Heart left ventricle (tissue), 16 donors: ENCODE measurements at regions of chr20 and their contacts with region 1.

Region 1: DNA sequence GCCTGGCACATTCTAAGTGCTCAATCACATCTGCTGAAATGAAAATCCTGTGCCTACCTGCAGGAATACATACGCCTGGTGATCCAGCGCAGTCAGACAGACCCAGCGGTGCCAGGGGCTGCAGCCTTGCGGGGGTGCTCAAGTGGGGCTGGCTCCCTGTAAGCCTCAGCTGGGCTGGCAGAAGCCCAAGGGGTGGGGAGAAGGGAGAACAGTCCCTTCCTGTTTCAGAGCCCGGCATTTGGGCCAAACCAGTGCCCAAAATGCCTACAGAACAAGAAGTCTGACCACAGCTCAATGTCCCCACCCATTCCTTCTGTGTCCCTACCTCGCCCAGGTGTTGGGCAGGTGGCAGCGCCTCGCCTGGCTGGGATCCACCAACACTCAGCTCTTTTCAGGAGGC is 22.6 kb downstream of the KCNK15 start:
- DNase-seq: no peak
- ATAC-seq: no peak
- H3K4me3 ChIP-seq: no peak overlapping the region
- H3K27ac ChIP-seq: no peak overlapping the region
- H3K4me1 ChIP-seq: peaks cover 0 to 3% (median 0%) of the 10 kb centered on the region in 12 donors
- H3K27me3 ChIP-seq: peaks cover 0 to 22% (median 5%) of the 10 kb centered on the region in 9 donors
- CTCF ChIP-seq: no peak
- POLR2A ChIP-seq: no peak

Region 2: GRCh38 chr20:44788706-44789456 is 20.6 kb after region 1 on chr20:
- intact Hi-C with region 1: loop called in 1 of 10 experiments (anchors 2 kb)
- DNase-seq: no peak
- ATAC-seq: no peak
- H3K4me3 ChIP-seq: no peak overlapping the region
- H3K27ac ChIP-seq: no peak overlapping the region
- H3K4me1 ChIP-seq: no peaks in the 10 kb centered on the region
- H3K27me3 ChIP-seq: peaks cover 0 to 9% (median 2%) of the 10 kb centered on the region in 9 donors
- CTCF ChIP-seq: no peak
- POLR2A ChIP-seq: no peak

Region 3: DNA sequence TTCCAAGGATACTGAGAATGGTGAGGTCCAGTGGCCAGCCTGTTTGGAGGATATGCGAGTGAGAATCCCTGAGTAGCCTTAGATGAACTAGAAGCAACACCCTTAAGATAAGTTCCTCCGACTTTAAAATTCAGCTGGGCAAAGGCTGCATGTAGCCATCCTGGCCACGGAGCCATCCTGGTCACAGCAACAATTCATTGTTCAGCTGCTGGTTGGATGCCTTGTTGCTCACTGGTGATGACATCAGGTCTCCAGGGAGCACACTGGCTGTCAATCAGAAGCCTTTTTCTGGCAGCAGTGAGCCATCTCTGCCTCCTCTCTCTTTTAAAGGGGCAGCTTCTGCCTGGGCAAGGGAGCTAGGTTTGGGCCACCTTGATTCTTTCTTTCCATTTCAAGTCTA is 64.5 kb after region 1 on chr20:
- intact Hi-C with region 1: no loop called
- DNase-seq: peak in 1 of 5 donors; percentile 29
- ATAC-seq: peak in 3 of 4 donors; percentile 55 to 63 (median 62)
- H3K4me3 ChIP-seq: no peak overlapping the region
- H3K27ac ChIP-seq: no peak overlapping the region
- H3K4me1 ChIP-seq: no peaks in the 10 kb centered on the region
- H3K27me3 ChIP-seq: peaks cover 0 to 31% (median 9%) of the 10 kb centered on the region in 9 donors
- CTCF ChIP-seq: no peak
- POLR2A ChIP-seq: no peak